ENCODE measurements at regions of chr11 and their contacts with region 1.

Region 1: DNA sequence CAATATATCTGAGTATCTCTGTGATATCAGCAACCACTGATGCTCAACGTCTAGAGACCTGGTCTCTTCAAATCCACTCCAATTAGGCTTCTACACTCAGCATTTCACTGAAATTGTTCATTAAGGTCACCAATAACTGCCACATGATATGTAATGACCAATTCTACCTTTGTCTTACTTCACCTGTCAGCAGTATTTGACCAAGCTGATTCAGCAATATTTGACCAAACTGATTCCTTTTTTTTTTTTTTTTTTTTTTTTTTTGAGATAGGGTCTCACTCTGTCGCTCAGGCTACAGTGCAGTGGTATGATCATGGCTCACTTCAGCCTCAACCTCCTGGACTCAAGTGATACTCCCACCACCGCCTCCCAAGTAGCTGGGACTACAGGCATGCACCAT is 5.6 kb downstream of the TSG101 start:
- DNase-seq: no peak
- ATAC-seq: no peak
- H3K4me3 ChIP-seq: no peak overlapping the region
- H3K27ac ChIP-seq: no peak overlapping the region
- H3K4me1 ChIP-seq: peaks cover 9% of the 10 kb centered on the region; the same call in 1 of the 2 replicates
- H3K27me3 ChIP-seq: no peaks in the 10 kb centered on the region
- CTCF ChIP-seq: no peak

Region 2: DNA sequence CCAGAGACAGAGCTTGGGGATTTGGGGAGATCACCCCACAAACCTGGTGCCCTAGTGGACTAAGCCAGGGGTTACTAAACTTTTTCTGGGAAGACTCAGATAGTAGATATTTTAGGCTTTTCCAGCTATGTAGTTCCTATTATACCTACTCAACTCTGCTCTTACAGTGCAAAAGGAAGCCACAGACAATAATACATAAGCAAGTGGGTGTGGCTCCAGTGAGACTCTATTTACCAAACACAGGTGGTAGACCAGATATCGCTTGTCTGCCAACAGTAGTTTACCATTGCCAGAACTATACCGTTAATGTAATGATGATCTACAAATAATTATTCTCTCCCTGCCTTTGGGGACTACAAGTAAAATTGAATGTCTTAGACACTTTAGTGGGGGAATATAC is 102.1 kb before region 1 on chr11:
- CTCF ChIA-PET with region 1: interaction called, 12 read pairs
- POLR2A ChIA-PET with region 1: no interaction called
- in situ Hi-C with region 1: no loop called
- intact Hi-C with region 1: no loop called
- DNase-seq: no peak
- ATAC-seq: no peak
- H3K4me3 ChIP-seq: no peak overlapping the region
- H3K27ac ChIP-seq: no peak overlapping the region
- H3K4me1 ChIP-seq: no peaks in the 10 kb centered on the region
- H3K27me3 ChIP-seq: no peaks in the 10 kb centered on the region
- CTCF ChIP-seq: no peak

Region 3: GRCh38 chr11:18669220-18669598 is 148.1 kb after region 1 on chr11:
- CTCF ChIA-PET with region 1: no interaction called
- POLR2A ChIA-PET with region 1: no interaction called
- in situ Hi-C with region 1: no loop called
- intact Hi-C with region 1: no loop called
- DNase-seq: no peak
- ATAC-seq: no peak
- H3K4me3 ChIP-seq: no peak overlapping the region
- H3K27ac ChIP-seq: no peak overlapping the region
- H3K4me1 ChIP-seq: no peaks in the 10 kb centered on the region
- H3K27me3 ChIP-seq: no peaks in the 10 kb centered on the region
- CTCF ChIP-seq: no peak

Region 4: DNA sequence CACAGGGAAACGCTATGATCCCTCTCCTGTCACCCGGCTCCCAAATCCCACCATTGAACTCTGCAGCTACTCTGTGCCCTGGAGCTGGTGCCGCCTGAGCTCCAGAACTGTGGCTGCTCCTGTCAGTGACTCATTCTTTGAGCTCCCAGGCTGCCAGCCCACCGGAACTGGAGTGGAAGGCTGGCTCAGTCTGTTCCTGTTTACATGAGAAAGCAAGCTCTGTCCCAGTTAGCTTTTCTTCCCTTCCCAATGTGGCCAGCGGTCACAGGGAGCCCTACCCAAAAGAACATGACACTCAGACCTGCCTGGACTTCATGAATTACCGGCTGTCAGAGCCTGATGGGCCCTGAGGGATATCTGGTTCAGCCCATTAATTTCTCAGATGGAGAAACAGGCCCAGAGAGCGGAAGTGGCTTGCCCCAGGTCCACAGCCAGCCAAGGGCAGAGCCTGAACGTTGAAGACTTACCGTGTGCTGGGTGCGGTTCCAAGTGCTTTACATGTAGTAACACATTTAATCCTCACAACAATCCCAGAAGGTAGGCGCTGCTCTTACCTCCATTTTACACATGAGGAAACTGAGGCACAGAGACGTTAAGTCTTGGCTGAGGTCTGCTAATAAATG is 228.7 kb after region 1 on chr11:
- CTCF ChIA-PET with region 1: no interaction called
- POLR2A ChIA-PET with region 1: no interaction called
- in situ Hi-C with region 1: no loop called
- intact Hi-C with region 1: no loop called
- DNase-seq: no peak
- ATAC-seq: peak; percentile 73
- H3K4me3 ChIP-seq: no peak overlapping the region
- H3K27ac ChIP-seq: no peak overlapping the region
- H3K4me1 ChIP-seq: peaks cover 3% of the 10 kb centered on the region; the same call in 1 of the 2 replicates
- H3K27me3 ChIP-seq: no peaks in the 10 kb centered on the region
- CTCF ChIP-seq: no peak